Breast epithelium (tissue), 4 donors: ENCODE measurements at regions of chr5 and their contacts with region 1.

Region 1: GRCh38 chr5:57111993-57112392 is 61.9 kb upstream of the GPBP1 start:
- DNase-seq: no peak
- H3K4me3 ChIP-seq: no peak overlapping the region
- H3K27ac ChIP-seq: no peak overlapping the region
- H3K4me1 ChIP-seq: no peaks in the 10 kb centered on the region
- H3K27me3 ChIP-seq: no peaks in the 10 kb centered on the region
- CTCF ChIP-seq: no peak
- POLR2A ChIP-seq: no peak

Region 2: GRCh38 chr5:56783261-56783660 is 328.7 kb before region 1 on chr5:
- intact Hi-C with region 1: loop called (anchors 5 kb)
- DNase-seq: no peak
- H3K4me3 ChIP-seq: no peak overlapping the region
- H3K27ac ChIP-seq: no peak overlapping the region
- H3K4me1 ChIP-seq: no peaks in the 10 kb centered on the region
- H3K27me3 ChIP-seq: no peaks in the 10 kb centered on the region
- CTCF ChIP-seq: no peak
- POLR2A ChIP-seq: no peak

Region 3: DNA sequence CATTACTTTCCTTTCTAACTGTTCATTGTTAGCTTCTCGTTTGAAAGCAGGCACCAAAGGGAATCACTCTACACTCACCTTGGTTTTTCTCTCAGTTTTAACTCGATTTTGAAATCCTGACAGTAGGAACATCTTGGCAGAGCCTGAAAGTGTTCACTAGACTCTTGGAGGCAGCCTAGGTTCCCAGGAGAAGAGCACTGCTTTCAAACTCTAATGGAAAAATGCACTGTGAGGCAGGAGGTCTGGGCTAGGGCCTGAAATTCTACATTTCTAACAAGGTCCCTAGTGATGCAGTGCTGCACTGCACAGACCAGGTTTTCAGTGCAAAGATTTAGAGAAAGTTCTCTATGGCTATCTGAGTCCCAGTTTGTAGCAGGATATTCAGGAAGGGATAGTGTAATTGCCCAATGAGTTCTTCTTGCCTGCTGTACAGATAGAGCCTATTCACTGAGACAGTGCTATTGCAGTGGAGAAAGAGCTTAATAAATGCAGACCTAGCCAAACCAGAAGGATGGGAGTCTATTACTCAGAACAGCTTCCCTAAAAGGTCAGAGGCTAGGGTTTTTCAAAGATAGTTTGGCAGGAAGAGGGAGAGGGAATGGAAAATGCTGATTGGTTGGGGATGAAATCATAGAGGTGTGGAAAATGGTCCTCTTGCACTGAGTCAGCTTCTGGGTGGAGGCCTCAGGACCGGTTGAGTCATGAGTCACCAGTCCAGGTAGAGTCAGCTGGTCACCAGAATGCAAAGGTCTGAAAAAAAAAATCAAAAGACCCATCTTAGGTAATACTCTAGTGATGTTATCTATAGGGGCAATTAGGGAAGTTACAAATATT is 215.8 kb after region 1 on chr5:
- intact Hi-C with region 1: no loop called
- DNase-seq: no peak
- H3K4me3 ChIP-seq: no peak overlapping the region
- H3K27ac ChIP-seq: no peak overlapping the region
- H3K4me1 ChIP-seq: peaks cover 0 to 4% of the 10 kb centered on the region in 2 donors
- H3K27me3 ChIP-seq: no peaks in the 10 kb centered on the region
- CTCF ChIP-seq: no peak
- POLR2A ChIP-seq: no peak